B cell (primary cell): ENCODE measurements at regions of chr11 and their contacts with region 1.

Region 1: GRCh38 chr11:727859-728748 is 19.2 kb upstream of the TALDO1 start:
- DNase-seq: peak; percentile 85
- ATAC-seq: peak; percentile 85
- H3K4me3 ChIP-seq: no peak overlapping the region
- H3K4me3 Mint-ChIP-seq: no peak overlapping the region
- H3K27ac ChIP-seq: no peak overlapping the region
- H3K27ac Mint-ChIP-seq: no peak overlapping the region
- H3K4me1 ChIP-seq: peaks cover 14 to 29% of the 10 kb centered on the region in 2 donors
- H3K4me1 Mint-ChIP-seq: peaks cover 12% of the 10 kb centered on the region
- H3K27me3 ChIP-seq: peaks cover 0 to 24% (median 0%) of the 10 kb centered on the region in 4 experiments
- H3K27me3 Mint-ChIP-seq: peaks cover 4% of the 10 kb centered on the region
- CTCF ChIP-seq: peak; percentile 97

Region 2: GRCh38 chr11:662689-663274 is 65.3 kb before region 1 on chr11:
- CTCF ChIA-PET with region 1: interaction called, 104 read pairs
- POLR2A ChIA-PET with region 1: no interaction called
- intact Hi-C with region 1: loop called (anchors 1 kb)
- DNase-seq: peak; percentile 66
- ATAC-seq: peak; percentile 80
- H3K4me3 ChIP-seq: no peak overlapping the region
- H3K4me3 Mint-ChIP-seq: no peak overlapping the region
- H3K27ac ChIP-seq: no peak overlapping the region
- H3K27ac Mint-ChIP-seq: no peak overlapping the region
- H3K4me1 ChIP-seq: no peaks in the 10 kb centered on the region
- H3K4me1 Mint-ChIP-seq: peaks cover 3% of the 10 kb centered on the region
- H3K27me3 ChIP-seq: no peaks in the 10 kb centered on the region
- H3K27me3 Mint-ChIP-seq: no peaks in the 10 kb centered on the region
- CTCF ChIP-seq: peak; percentile 75

Region 3: DNA sequence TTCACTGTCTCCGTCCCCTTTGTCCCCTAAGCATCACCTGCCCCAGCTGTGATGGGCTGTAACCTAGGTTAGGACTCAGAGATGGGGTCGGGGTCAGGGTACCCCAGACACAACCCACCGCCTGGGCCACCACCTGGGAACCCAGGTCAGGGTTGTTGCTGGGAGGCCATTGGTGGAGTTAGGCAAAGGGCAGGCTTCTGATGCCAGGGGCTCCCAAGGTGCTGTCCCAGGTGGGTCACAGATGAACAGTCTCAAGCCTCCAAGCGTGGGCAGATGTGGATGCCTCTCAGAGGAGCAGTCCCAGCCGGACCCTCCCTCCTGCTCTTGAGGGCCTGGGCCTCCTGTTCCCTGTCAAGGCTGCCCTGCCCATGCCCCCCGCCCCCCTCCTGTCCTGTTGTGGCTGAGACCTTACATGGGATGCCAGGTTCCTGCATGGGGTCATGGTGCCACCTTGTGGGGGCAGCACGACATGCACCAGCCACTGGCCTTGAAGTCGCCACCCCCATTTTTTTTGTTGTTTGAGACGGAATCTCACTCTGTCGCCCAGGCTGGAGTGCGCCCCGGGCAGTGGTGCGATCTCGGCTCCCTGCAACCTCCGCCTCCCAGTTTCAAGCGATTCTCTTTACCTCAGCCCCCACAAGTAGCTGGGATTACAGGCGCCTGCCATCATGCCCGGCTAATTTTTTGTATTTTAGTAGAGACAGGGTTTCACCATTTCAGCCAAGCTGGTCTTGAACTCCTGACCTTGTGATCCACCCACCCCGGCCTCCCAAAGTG is 37.1 kb after region 1 on chr11:
- CTCF ChIA-PET with region 1: interaction called, 4 read pairs
- POLR2A ChIA-PET with region 1: no interaction called
- intact Hi-C with region 1: loop called (anchors 1 kb)
- DNase-seq: peak; percentile 81
- ATAC-seq: peak; percentile 86
- H3K4me3 ChIP-seq: no peak overlapping the region
- H3K4me3 Mint-ChIP-seq: no peak overlapping the region
- H3K27ac ChIP-seq: peak overlapping the region in 1 of 2 donors; percentile 12
- H3K27ac Mint-ChIP-seq: peak overlapping the region; percentile 50
- H3K4me1 ChIP-seq: no peaks in the 10 kb centered on the region
- H3K4me1 Mint-ChIP-seq: peaks cover 2% of the 10 kb centered on the region
- H3K27me3 ChIP-seq: no peaks in the 10 kb centered on the region
- H3K27me3 Mint-ChIP-seq: no peaks in the 10 kb centered on the region
- CTCF ChIP-seq: peak; percentile 74